ENCODE measurements at regions of chr11 and their contacts with region 1.

Region 1: DNA sequence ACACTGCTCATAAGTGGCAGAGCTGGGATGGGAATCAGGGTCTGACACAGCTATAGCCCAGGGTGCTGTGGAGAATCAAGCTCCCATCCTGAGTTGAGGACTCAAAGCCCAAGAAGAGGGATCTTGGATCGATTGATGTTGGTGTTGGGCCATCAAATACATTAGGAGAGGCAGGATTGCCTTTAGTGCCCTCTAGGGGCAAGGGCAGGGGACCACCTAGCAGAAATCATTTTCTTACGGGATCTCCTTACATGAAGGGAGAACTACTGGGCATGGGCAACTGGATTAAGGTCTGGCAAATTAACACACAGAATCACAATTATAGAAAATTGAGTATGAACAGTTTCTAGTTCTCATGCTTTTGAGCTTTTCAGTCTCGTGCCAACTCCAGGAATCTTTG is 24.9 kb upstream of the EMSY start:
- DNase-seq: peak; percentile 41 to 65 (median 57)
- H3K4me3 ChIP-seq: no peak overlapping the region
- H3K27ac ChIP-seq: no peak overlapping the region
- H3K4me1 ChIP-seq: no peaks in the 10 kb centered on the region
- H3K27me3 ChIP-seq: peaks cover 0 to 1% (median 0%) of the 10 kb centered on the region in 5 experiments

Region 2: GRCh38 chr11:76408171-76408965 is 11.5 kb before region 1 on chr11:
- CTCF ChIA-PET with region 1: interaction called, 12 read pairs
- POLR2A ChIA-PET with region 1: no interaction called
- DNase-seq: peak in 2 of 3 donors; percentile 18 to 38
- H3K4me3 ChIP-seq: no peak overlapping the region
- H3K27ac ChIP-seq: no peak overlapping the region
- H3K4me1 ChIP-seq: peaks cover 0 to 7% (median 5%) of the 10 kb centered on the region in 4 experiments
- H3K27me3 ChIP-seq: peaks cover 0 to 2% (median 0%) of the 10 kb centered on the region in 5 experiments

Region 3: DNA sequence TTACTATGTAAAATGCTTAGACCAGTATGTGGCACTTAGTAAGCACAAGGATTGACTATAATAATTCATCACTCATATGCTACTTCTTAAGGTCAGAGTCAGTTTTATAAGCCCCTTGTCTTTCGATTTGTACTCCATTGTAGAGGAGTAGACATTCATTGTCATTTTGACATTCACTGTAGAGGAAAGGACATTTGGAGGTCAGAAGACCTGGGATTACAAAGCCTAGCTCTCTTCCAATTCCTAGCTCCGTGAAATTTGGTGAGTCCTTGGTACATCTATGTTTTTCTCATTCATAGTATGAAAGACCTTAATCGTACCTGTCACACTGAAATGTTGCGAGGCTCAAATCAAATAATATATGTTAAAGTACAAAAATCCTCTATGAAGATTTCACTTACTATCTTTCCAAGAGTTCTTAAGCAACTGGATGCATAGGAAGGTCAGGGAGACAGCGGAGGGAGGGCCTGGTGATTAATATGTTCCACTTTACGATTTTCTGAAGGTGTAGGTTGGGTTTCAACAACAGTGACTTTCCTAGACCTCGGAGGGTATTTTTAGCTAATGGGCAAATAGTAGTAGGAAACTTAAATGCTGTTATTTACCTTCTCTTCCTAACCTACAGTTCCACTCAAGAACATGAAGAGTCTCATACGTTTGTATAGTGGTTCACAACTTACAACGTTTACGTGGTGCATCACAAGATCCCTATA is 23.5 kb after region 1 on chr11:
- CTCF ChIA-PET with region 1: interaction called, 10 read pairs
- POLR2A ChIA-PET with region 1: no interaction called
- DNase-seq: peak in 1 of 3 donors; percentile 17
- H3K4me3 ChIP-seq: peak overlapping the region in 6 of 7 experiments; percentile 85 to 99 (median 98)
- H3K27ac ChIP-seq: peak overlapping the region; percentile 92 to 96
- H3K4me1 ChIP-seq: peaks cover 11 to 21% (median 17%) of the 10 kb centered on the region in 4 experiments
- H3K27me3 ChIP-seq: no peaks in the 10 kb centered on the region

Region 4: DNA sequence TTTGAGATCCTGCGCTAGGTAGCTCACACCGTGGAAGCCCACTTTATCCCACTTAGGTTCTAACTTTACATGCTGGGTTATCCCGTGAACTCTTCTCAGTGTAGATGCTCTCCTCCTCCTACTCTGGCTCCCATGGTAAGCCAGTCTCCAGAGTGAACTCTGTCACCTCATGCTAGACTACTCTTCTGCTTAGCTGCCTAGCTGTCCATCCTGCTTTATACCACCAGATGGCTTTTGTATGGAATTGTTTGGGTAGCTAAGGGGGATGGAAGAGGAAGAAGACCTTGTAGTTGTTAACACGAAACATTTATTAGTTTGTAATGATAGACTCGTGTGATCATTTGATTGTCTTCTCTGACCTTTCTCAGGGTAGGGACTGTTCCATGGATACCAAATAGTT is 71.8 kb after region 1 on chr11:
- CTCF ChIA-PET with region 1: no interaction called
- POLR2A ChIA-PET with region 1: no interaction called
- DNase-seq: no peak
- H3K4me3 ChIP-seq: no peak overlapping the region
- H3K27ac ChIP-seq: no peak overlapping the region
- H3K4me1 ChIP-seq: peaks cover 0 to 6% (median 4%) of the 10 kb centered on the region in 4 experiments
- H3K27me3 ChIP-seq: no peaks in the 10 kb centered on the region